Sigmoid colon (tissue), 7 donors: ENCODE measurements at regions of chr4 and their contacts with region 1.

Region 1: DNA sequence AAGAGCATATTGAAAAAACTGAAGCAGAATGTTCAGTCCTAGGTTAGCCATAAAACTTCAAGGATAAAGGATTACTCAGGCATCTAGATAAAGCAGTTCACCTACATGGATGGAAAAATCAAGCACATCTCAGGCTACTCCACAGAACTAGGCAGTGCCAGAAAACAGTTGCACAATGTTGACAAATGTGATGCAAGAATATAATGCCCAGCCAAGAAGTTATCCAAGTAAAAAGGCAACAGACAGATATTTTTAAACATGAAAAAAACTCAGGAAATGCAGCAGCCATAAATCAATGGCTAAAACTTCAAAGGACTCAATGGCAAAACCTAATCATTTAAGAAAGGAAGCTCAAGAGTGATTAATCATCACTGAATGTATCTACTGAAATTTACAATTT is 456.0 kb upstream of the FAM241A start:
- DNase-seq: peak; percentile 70
- H3K4me3 ChIP-seq: no peak overlapping the region
- H3K27ac ChIP-seq: peak overlapping the region in 3 of 4 donors; percentile 57 to 68 (median 66)
- H3K4me1 ChIP-seq: peaks cover 0 to 44% (median 35%) of the 10 kb centered on the region in 4 donors
- H3K27me3 ChIP-seq: no peaks in the 10 kb centered on the region
- CTCF ChIP-seq: no peak
- EP300 ChIP-seq: peak in 2 of 4 donors; percentile 21 to 60
- POLR2A ChIP-seq: no peak

Region 2: GRCh38 chr4:111778543-111778942 is 89.3 kb after region 1 on chr4:
- intact Hi-C with region 1: loop called (anchors 5 kb)
- DNase-seq: no peak
- H3K4me3 ChIP-seq: no peak overlapping the region
- H3K27ac ChIP-seq: no peak overlapping the region
- H3K4me1 ChIP-seq: peaks cover 0 to 60% (median 32%) of the 10 kb centered on the region in 4 donors
- H3K27me3 ChIP-seq: no peaks in the 10 kb centered on the region
- CTCF ChIP-seq: peak in 1 of 4 experiments; percentile 31
- EP300 ChIP-seq: no peak
- POLR2A ChIP-seq: no peak